Activated B cell treated with CpG ODN at 0.5 μM for 24 hours (primary cell): ENCODE measurements at regions of chr16 and their contacts with region 1.

Region 1: DNA sequence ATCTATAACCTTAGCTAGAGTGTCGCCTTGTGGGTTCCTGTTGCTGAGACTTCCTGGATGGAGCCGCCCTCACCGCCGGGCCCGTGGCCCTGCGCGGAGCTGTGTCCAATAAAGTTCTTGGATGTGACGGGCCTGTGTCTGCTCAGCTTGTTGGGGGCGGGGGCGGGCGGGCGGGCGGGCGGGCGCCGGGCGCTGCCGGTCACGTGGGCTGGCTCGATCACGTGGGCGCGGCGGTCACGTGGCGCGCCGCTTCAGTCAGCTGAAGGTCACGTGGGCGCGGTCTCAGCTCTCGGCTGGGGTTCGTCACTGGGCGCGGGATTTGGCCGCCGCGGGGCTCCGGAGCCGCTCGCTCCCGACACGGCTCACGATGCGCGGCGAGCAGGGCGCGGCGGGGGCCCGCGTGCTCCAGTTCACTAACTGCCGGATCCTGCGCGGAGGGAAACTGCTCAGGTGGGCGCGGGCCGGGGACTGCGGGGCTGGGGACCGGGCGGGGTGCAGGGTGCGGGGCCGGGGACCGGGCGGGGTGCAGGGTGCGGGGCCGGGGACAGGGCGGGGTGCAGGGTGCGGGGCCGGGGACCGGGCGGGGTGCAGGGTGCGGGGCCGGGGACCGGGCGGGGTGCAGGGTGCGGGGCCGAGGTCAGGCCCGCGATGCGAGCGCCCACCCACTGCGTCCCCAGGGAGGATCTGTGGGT is at the start of gene AMDHD2:
- DNase-seq: peak; percentile 87
- ATAC-seq: peak; percentile 62
- H3K4me3 Mint-ChIP-seq: peak within 1 kb of the TSS; percentile 91
- H3K27ac Mint-ChIP-seq: peak within 1 kb of the TSS; percentile 94
- H3K4me1 Mint-ChIP-seq: peaks cover 61% of the 10 kb centered on the region
- H3K27me3 Mint-ChIP-seq: no peaks in the 10 kb centered on the region
- CTCF ChIP-seq: no peak
- total RNA-seq, gene AMDHD2: 65.5 and 90.8 TPM in 2 replicates

Region 2: GRCh38 chr16:2507052-2507659 is 13.1 kb before region 1 on chr16:
- CTCF ChIA-PET with region 1: interaction called, 7 read pairs
- POLR2A ChIA-PET with region 1: interaction called, 17 read pairs
- intact Hi-C with region 1: no loop called
- DNase-seq: peak; percentile 51
- ATAC-seq: peak; percentile 89
- H3K4me3 Mint-ChIP-seq: peak overlapping the region; percentile 33
- H3K27ac Mint-ChIP-seq: peak overlapping the region; percentile 89
- H3K4me1 Mint-ChIP-seq: peaks cover 62% of the 10 kb centered on the region
- H3K27me3 Mint-ChIP-seq: no peaks in the 10 kb centered on the region
- CTCF ChIP-seq: no peak

Region 3: GRCh38 chr16:2531767-2532493 is 11.7 kb after region 1 on chr16:
- CTCF ChIA-PET with region 1: interaction called, 3 read pairs
- POLR2A ChIA-PET with region 1: interaction called, 76 read pairs
- intact Hi-C with region 1: loop called (anchors 1 kb)
- DNase-seq: peak; percentile 97
- ATAC-seq: peak; percentile 94
- H3K4me3 Mint-ChIP-seq: peak overlapping the region; percentile 97
- H3K27ac Mint-ChIP-seq: peak overlapping the region; percentile 96
- H3K4me1 Mint-ChIP-seq: peaks cover 23% of the 10 kb centered on the region
- H3K27me3 Mint-ChIP-seq: no peaks in the 10 kb centered on the region
- CTCF ChIP-seq: no peak

Region 4: DNA sequence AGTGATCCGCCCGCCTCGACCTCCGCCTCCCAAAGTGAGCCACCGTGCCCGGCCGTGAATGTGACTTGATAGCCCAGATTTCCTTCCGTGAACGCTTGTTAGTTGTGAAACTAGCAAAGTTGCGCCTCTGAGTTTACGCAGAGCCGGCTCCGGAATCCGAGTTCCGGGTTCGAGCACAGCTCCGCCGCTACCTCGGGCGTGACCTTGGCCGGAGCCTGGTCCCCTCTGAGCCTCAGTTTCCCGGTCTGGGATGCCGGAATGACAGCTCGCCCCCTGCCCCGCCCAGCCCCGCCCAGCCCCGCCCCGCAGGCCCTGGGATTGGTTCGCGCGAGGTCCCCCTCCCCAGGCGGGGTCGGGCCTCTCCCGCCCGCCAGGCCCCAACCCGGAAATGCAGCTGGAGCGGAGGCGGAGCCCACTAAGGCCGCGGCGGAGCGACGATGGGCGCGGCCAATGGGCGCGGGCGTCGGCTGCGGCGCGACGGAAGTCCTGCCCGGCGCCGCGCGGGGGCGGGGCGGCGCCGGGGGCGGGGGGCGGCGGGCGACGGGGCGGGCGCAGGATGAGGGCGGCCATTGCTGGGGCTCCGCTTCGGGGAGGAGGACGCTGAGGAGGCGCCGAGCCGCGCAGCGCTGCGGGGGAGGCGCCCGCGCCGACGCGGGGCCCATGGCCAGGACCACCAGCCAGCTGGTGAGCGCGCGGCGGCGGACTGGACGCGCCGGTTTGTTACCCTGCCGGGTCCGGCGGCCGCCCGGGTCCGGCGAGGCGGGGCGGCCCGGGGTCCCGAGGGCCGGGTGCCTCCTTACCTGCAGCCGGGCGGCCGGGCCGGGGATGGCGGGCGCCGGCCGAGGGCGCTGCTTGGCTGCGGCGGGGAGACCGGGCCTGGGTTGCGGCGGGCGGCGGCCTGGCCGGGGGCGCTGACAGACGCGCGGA is 17.5 kb after region 1 on chr16 and contains the start of gene PDPK1:
- CTCF ChIA-PET with region 1: interaction called, 3 read pairs
- POLR2A ChIA-PET with region 1: interaction called, 76 read pairs
- intact Hi-C with region 1: loop called (anchors 1 kb)
- DNase-seq: peak; percentile 85
- ATAC-seq: peak; percentile 88
- H3K4me3 Mint-ChIP-seq: peak within 1 kb of the TSS; percentile 87
- H3K27ac Mint-ChIP-seq: peak within 1 kb of the TSS; percentile 90
- H3K4me1 Mint-ChIP-seq: peaks cover 44% of the 10 kb centered on the region
- H3K27me3 Mint-ChIP-seq: no peaks in the 10 kb centered on the region
- CTCF ChIP-seq: no peak
- total RNA-seq, gene PDPK1: 42.5 and 62.0 TPM in 2 replicates